ENCODE measurements at regions of chr3 and their contacts with region 1.

Region 1: DNA sequence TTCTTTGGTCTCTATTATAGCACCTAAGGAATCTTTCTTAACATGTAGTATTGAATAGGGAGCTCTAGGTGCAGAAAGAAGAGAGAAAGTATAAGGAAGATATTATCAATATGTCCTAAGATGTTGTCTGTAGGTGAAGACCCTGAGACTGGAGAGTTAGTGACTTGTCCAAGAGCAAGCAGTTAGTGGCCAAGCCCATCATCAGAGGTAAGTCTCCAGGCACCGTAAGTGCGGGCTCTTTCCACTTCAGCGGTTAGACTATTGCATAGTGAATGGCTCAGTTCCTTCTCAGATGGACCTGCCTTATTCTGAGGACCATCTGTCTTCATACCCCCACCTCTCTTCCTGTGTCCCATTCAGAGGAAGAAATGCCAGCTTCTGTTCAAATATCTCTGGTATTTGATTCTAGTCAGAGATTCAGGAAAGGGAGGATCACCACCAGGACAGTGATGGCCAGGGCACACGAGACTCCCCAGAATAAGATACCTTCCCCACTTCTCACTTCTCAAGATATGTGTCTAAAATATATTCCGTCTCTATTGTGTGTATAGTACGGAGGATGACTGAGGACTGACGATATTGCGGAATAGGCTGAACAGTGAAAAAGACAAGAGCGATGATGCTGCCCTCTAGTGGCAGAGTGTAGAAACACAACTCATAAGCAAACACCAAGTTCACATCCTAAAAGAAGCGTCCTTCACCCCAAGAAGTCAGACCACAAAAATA is 19.1 kb upstream of the ADGRG7 start:
- DNase-seq: peak; percentile 70
- ATAC-seq: peak; percentile 94
- H3K4me3 ChIP-seq: peak overlapping the region in 1 of 2 experiments; percentile 26; a peak in 2 of 4 replicates
- H3K27ac ChIP-seq: no peak overlapping the region
- H3K4me1 ChIP-seq: 0 out of 2 replicates have a peak, but pooled peaks cover 2% of the 10 kb centered on the region
- H3K27me3 ChIP-seq: no peaks in the 10 kb centered on the region
- CTCF ChIP-seq: peak; percentile 90

Region 2: DNA sequence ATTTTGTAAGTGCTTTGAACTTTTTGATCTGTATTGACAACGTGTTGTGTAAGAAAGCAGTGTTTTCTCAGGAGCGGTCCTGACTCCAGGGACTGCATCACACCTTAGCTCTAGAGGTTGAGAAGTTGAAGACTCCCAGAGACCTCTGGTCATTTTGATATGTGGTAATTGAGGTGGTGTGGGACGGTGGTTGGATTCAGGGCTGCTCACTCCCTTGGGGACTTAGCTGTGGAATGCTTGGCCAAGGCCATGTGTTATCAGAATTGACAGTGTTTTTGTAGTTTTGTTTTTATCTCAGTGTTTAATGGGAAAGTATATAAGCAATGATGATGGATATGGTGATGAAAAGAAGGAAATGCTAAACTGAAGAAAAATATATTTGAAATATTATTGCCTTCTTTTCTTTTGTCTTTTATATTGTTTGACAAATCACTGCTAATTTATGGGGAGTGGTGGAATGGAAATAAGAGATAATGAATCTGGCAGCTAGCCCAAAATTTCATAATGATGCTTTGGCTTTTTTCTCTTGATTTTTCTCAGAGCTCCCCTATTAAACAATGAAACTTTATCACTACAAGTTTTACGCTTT is 756.6 kb before region 1 on chr3:
- CTCF ChIA-PET with region 1: no interaction called
- POLR2A ChIA-PET with region 1: no interaction called
- in situ Hi-C with region 1: no loop called
- intact Hi-C with region 1: loop called (anchors 5 kb)
- DNase-seq: no peak
- ATAC-seq: no peak
- H3K4me3 ChIP-seq: no peak overlapping the region
- H3K27ac ChIP-seq: no peak overlapping the region; the same call in 1 of the 2 replicates
- H3K4me1 ChIP-seq: no peaks in the 10 kb centered on the region
- H3K27me3 ChIP-seq: no peaks in the 10 kb centered on the region
- CTCF ChIP-seq: no peak

Region 3: DNA sequence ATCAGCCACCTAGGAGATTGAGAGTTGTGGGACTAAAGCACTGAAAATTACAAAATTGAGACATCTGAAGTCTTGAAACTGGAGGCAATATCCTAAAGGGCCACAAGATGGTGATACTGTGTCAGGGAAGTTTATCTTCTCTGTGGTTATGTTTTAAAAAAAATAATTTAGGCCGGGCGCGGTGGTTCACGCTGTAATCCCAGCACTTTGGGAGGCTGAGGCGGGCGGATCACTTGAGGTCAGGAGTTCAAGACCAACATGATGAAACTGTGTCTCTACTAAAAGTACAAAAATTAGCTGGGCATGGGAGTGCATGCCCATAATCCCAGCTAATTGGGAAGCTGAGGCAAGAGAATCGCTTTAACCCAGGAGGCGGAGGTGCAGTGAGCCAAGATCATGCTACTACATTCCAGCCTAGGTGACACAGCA is 273.6 kb before region 1 on chr3:
- CTCF ChIA-PET with region 1: no interaction called
- POLR2A ChIA-PET with region 1: no interaction called
- in situ Hi-C with region 1: no loop called
- intact Hi-C with region 1: loop called (anchors 2 kb)
- DNase-seq: peak; percentile 24
- ATAC-seq: peak; percentile 85
- H3K4me3 ChIP-seq: no peak overlapping the region
- H3K27ac ChIP-seq: no peak overlapping the region
- H3K4me1 ChIP-seq: no peaks in the 10 kb centered on the region
- H3K27me3 ChIP-seq: no peaks in the 10 kb centered on the region
- CTCF ChIP-seq: peak; percentile 84

Region 4: GRCh38 chr3:100400780-100401673 is 189.2 kb before region 1 on chr3 and contains the starts of genes LNP1 and TOMM70:
- CTCF ChIA-PET with region 1: no interaction called
- POLR2A ChIA-PET with region 1: no interaction called
- in situ Hi-C with region 1: no loop called
- intact Hi-C with region 1: loop called (anchors 10 kb)
- DNase-seq: peak; percentile 94
- ATAC-seq: peak; percentile 97
- H3K4me3 ChIP-seq: peak within 1 kb of the TSS; percentile 74 to 87
- H3K27ac ChIP-seq: peak within 1 kb of the TSS; percentile 98
- H3K4me1 ChIP-seq: peaks cover 10% of the 10 kb centered on the region; the same call in 1 of the 2 replicates
- H3K27me3 ChIP-seq: no peaks in the 10 kb centered on the region
- CTCF ChIP-seq: no peak
- total RNA-seq, gene LNP1: 1.8 TPM
- total RNA-seq, gene TOMM70: 55.7 TPM

Region 5: DNA sequence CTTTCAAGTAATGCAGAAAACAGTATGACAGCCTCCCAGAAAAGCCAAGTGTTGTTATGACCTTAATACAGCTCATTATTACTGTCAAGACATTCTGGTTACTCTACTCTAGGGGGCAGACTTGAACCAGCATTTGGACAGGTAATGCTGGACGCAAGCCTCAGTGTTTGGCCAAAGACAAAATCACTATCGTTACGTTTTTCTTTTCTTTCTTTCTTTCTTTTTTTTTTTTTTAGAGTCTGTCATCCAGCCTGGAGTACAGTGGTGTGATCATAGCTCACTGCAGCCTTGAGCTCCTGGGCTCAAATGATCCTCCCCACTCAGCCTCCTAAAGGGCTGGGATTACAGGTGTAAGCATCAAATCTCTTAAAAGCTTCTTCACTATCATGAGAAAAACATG is 127.3 kb before region 1 on chr3:
- CTCF ChIA-PET with region 1: interaction called, 18 read pairs
- POLR2A ChIA-PET with region 1: no interaction called
- in situ Hi-C with region 1: no loop called
- intact Hi-C with region 1: loop called (anchors 1 kb)
- DNase-seq: peak; percentile 30
- ATAC-seq: peak; percentile 92
- H3K4me3 ChIP-seq: no peak overlapping the region
- H3K27ac ChIP-seq: no peak overlapping the region
- H3K4me1 ChIP-seq: no peaks in the 10 kb centered on the region
- H3K27me3 ChIP-seq: no peaks in the 10 kb centered on the region; the same call in 1 of the 2 replicates
- CTCF ChIP-seq: peak; percentile 79